Esophagus muscularis mucosa (tissue), 4 donors: ENCODE measurements at regions of chr17 and their contacts with region 1.

Region 1: DNA sequence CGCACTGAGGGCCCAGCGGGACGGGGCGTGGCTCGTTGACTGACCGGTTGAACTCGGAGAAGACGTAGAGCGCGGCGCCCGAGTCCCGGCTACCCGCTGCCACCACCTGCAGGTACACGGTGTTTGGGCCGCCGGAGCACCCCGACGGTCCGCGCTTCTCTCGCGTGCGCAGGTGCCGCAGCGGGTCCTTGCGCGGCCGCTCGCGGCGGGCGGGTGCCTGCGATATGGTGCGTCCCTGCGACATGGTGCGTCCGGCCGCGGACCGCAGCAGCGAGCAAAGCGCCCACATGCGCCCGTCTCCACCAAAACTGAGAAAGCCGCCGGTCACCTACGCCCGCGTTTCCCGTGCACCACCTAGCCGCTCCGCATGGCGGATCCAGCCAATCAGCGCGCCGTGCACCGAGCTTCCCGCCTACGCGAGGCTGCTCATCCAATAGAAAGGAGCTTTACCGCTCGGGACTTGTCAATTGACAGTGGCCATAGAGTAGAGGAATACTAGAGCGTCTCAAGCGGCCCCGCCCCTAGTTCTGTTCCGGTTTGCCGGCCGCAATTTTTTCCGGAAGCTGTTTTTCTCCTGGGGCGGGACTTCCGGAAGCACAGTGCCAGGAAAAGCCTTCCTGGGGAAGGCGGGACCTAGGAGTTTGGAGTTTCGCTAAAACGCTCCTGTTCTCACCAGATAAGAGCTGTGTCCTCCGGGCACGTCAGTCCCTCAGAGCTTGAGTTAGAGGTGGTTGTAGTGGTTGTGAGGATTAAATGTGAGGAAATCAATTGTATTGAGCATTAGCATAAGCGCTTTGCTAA is at the start of gene ELAC2:
- DNase-seq: peak; percentile 99
- H3K4me3 ChIP-seq: peak within 1 kb of the TSS; percentile 82 to 99 (median 90)
- H3K27ac ChIP-seq: peak within 1 kb of the TSS; percentile 78 to 90 (median 86)
- H3K4me1 ChIP-seq: peaks cover 6 to 27% (median 22%) of the 10 kb centered on the region in 4 donors
- H3K27me3 ChIP-seq: no peaks in the 10 kb centered on the region
- CTCF ChIP-seq: peak in 1 of 3 experiments; percentile 14
- EP300 ChIP-seq: no peak
- POLR2A ChIP-seq: peak; percentile 40
- total RNA-seq, gene ELAC2: 55.5 to 94.7 (median 90.1) TPM

Region 2: DNA sequence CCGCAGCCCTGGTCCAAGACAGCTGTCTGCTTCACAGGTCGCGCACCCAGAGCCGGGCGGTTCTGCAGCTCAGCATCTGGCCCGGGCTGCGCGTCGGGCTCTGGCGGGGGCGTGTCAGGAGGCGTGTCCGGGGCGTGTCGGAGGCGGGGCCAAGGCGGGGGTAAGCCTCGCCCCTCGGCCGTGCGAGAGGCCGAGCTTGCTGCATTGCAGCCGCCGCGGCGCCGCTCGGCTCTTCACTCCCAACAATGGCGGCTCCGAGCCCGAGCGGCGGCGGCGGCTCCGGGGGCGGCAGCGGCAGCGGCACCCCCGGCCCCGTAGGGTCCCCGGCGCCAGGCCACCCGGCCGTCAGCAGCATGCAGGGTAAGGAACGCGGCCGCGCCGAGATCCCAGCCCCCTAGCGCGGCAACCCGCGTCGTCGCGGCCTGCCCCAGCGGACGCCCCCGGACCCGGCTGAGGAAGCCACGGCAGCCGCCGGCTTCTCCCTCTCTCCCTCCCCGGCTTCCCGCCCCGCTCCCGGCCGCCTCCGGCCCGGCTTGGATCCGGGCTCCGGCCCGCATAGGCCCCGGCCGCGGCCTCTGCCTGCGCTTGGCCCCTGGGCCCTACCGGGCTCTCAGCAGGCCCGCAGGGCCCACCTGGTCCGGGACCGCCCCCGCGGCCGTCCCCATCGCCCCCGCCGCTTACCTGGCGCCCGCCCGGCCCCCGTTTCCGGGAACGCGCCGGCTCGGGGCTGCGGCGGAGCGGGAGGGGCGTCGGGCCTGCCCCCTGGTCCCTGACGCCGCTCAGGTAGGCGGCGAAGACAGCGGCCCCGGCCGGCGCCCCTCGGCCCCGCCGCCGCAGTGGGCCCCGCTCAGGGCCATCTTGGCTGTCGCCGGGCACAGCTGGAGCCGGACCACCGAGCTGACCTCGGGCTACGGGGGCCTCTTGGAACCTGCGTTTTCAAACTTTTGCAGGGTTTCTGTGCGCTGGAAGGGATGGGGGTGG is 996.9 kb before region 1 on chr17 and contains the start of gene MAP2K4:
- intact Hi-C with region 1: loop called (anchors 10 kb)
- DNase-seq: peak; percentile 97
- H3K4me3 ChIP-seq: peak within 1 kb of the TSS; percentile 81 to 98 (median 97)
- H3K27ac ChIP-seq: peak within 1 kb of the TSS; percentile 87 to 94 (median 92)
- H3K4me1 ChIP-seq: peaks cover 16 to 53% (median 50%) of the 10 kb centered on the region in 4 donors
- H3K27me3 ChIP-seq: no peaks in the 10 kb centered on the region
- CTCF ChIP-seq: no peak
- EP300 ChIP-seq: no peak
- POLR2A ChIP-seq: no peak
- total RNA-seq, gene MAP2K4: 23.1 to 31.9 (median 31.0) TPM

Region 3: GRCh38 chr17:12974005-12974531 is 43.8 kb before region 1 on chr17:
- intact Hi-C with region 1: no loop called
- DNase-seq: no peak
- H3K4me3 ChIP-seq: peak overlapping the region; percentile 51 to 61 (median 54)
- H3K27ac ChIP-seq: peak overlapping the region in 1 of 4 donors; percentile 33
- H3K4me1 ChIP-seq: peaks cover 13 to 16% (median 15%) of the 10 kb centered on the region in 4 donors
- H3K27me3 ChIP-seq: peaks cover 0 to 10% (median 0%) of the 10 kb centered on the region in 4 donors
- CTCF ChIP-seq: no peak
- EP300 ChIP-seq: no peak
- POLR2A ChIP-seq: no peak